HepG2 (cell line): ENCODE measurements at regions of chr1 and their contacts with region 1.

Region 1: DNA sequence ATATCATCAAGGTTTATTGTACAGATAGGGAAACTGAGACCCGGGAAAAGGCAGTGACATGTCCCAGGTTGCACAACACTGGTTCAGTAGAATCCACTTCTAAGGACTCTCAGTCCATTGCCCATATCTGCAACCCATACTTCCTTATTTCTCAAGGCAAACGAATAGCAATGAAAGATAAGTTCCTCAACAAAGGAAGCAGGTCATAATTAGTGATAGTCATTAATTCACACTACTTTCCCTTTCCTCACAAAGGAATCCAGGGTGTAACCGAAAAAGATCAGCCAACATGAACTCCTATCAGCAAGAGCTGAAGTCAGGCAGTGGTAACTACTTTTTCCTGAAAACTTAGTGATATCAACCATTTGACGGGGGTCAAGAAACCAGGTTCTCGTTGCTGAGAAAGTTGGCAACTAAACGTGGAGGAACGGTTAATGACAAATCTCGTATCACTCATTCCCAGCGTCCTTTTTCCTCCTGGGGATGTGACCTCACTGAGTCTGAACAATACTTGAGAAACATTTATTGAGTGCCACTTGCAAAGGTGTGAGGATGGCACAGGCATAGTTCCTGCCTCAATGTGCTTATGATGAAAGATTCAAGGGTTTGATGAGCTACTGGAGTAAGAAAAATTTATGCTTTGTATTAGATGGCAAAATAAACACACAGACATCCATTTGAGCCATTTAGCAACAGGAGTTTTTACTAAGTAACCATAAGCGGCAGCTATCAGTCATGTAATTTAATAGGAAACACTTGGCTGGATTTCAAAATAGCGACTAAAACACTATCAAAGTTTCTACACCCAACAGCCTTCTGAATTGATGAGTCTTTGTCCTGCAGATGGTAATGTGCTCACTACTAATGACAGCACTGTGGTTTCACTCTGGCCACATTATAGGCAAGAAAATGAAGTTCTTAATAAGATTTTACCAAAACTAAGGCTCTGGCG is 82.3 kb downstream of the PLPP3 start:
- DNase-seq: no peak
- ATAC-seq: no peak
- H3K4me3 ChIP-seq: no peak overlapping the region
- H3K27ac ChIP-seq: peak overlapping the region; percentile 90
- H3K4me1 ChIP-seq: peaks cover 95% of the 10 kb centered on the region
- H3K27me3 ChIP-seq: no peaks in the 10 kb centered on the region
- CTCF ChIP-seq: no peak
- EP300 ChIP-seq: no peak
- POLR2A ChIP-seq: no peak
- RAD21 ChIP-seq: no peak

Region 2: GRCh38 chr1:56330391-56331026 is 166.6 kb before region 1 on chr1:
- CTCF ChIA-PET with region 1: no interaction called
- POLR2A ChIA-PET with region 1: interaction called, 10 read pairs
- in situ Hi-C with region 1: no loop called
- intact Hi-C with region 1: loop called (anchors 10 kb)
- DNase-seq: peak; percentile 47
- ATAC-seq: no peak; the same call in 2 of the 3 replicates
- H3K4me3 ChIP-seq: peak overlapping the region in 1 of 3 experiments; percentile 47; a peak in 1 of 6 replicates
- H3K27ac ChIP-seq: peak overlapping the region; percentile 85
- H3K4me1 ChIP-seq: peaks cover 39% of the 10 kb centered on the region
- H3K27me3 ChIP-seq: no peaks in the 10 kb centered on the region
- CTCF ChIP-seq: no peak
- EP300 ChIP-seq: no peak
- POLR2A ChIP-seq: no peak
- RAD21 ChIP-seq: no peak

Region 3: DNA sequence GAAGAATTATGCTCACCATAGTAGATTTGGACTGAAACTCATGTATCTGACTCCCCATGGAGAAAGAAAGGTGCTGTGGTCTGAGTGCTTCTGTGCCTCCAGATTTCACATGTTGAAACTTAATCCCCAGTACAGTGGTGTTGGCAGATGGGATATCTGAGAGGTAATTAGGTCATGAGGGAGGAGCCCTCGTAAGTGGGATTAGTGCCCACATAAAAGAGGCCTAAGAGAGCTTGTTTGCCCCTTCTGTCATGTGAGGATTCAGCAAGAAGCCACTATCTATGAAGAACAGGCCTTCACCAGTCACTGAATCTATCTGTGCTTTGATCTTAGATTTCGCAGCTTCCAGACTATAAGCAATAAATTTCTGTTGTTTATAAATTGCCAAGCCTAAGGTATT is 67.8 kb before region 1 on chr1:
- CTCF ChIA-PET with region 1: no interaction called
- POLR2A ChIA-PET with region 1: no interaction called
- in situ Hi-C with region 1: no loop called
- intact Hi-C with region 1: no loop called
- DNase-seq: no peak
- ATAC-seq: no peak
- H3K4me3 ChIP-seq: no peak overlapping the region
- H3K27ac ChIP-seq: no peak overlapping the region
- H3K4me1 ChIP-seq: peaks cover 62% of the 10 kb centered on the region
- H3K27me3 ChIP-seq: no peaks in the 10 kb centered on the region
- CTCF ChIP-seq: no peak
- EP300 ChIP-seq: peak in 1 of 2 experiments; percentile 4; a peak in 1 of 4 replicates
- POLR2A ChIP-seq: no peak
- RAD21 ChIP-seq: no peak

Region 4: GRCh38 chr1:56461158-56462127 is 35.7 kb before region 1 on chr1:
- CTCF ChIA-PET with region 1: no interaction called
- POLR2A ChIA-PET with region 1: interaction called, 10 read pairs
- in situ Hi-C with region 1: no loop called
- intact Hi-C with region 1: no loop called
- DNase-seq: peak; percentile 95
- ATAC-seq: peak; percentile 99
- H3K4me3 ChIP-seq: peak overlapping the region in 1 of 3 experiments; percentile 3; a peak in 1 of 6 replicates
- H3K27ac ChIP-seq: peak overlapping the region; percentile 80
- H3K4me1 ChIP-seq: peaks cover 47% of the 10 kb centered on the region
- H3K27me3 ChIP-seq: no peaks in the 10 kb centered on the region
- CTCF ChIP-seq: peak; percentile 59
- EP300 ChIP-seq: peak; percentile 60 to 94; a peak in 3 of 4 replicates
- POLR2A ChIP-seq: peak in 1 of 2 experiments; percentile 62; a peak in 2 of 4 replicates
- RAD21 ChIP-seq: peak; percentile 57

Region 5: DNA sequence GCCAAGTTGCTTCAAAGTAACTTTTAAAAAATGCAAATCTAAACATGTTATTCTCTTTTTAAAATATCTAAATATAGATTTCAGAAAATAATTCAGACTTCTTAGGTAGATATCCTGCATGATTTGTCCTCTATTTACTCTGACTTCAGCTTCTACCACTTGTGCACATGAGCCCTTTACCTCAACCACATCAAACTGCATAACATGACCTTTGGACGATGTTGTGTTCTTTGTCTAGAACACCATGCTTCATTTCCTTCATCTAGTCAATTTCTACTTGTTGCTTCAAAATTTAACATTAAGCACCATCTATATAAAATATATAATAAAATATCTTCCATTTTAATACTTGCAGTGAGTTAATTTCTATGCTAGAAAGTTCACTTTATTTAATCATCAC is 14.6 kb before region 1 on chr1:
- CTCF ChIA-PET with region 1: no interaction called
- POLR2A ChIA-PET with region 1: interaction called, 26 read pairs
- in situ Hi-C with region 1: no loop called
- intact Hi-C with region 1: loop called (anchors 1 kb)
- DNase-seq: peak; percentile 88
- ATAC-seq: no peak
- H3K4me3 ChIP-seq: no peak overlapping the region; a peak in 1 of 6 replicates
- H3K27ac ChIP-seq: no peak overlapping the region
- H3K4me1 ChIP-seq: peaks cover 65% of the 10 kb centered on the region
- H3K27me3 ChIP-seq: no peaks in the 10 kb centered on the region
- CTCF ChIP-seq: no peak
- EP300 ChIP-seq: peak in 1 of 2 experiments; percentile 76; a peak in 2 of 4 replicates
- POLR2A ChIP-seq: no peak
- RAD21 ChIP-seq: no peak

Region 6: GRCh38 chr1:56570924-56571372 is 73.9 kb after region 1 on chr1:
- CTCF ChIA-PET with region 1: no interaction called
- POLR2A ChIA-PET with region 1: interaction called, 15 read pairs
- in situ Hi-C with region 1: no loop called
- intact Hi-C with region 1: no loop called
- DNase-seq: no peak
- ATAC-seq: no peak
- H3K4me3 ChIP-seq: no peak overlapping the region
- H3K27ac ChIP-seq: peak overlapping the region; percentile 15
- H3K4me1 ChIP-seq: peaks cover 98% of the 10 kb centered on the region
- H3K27me3 ChIP-seq: no peaks in the 10 kb centered on the region
- CTCF ChIP-seq: no peak
- EP300 ChIP-seq: no peak
- POLR2A ChIP-seq: no peak
- RAD21 ChIP-seq: no peak